BJ (cell line): ENCODE measurements at regions of chr2 and their contacts with region 1.

Region 1: GRCh38 chr2:241368643-241369042 is 12.6 kb downstream of the FARP2 start:
- DNase-seq: no peak
- H3K4me3 ChIP-seq: no peak overlapping the region
- H3K27me3 ChIP-seq: no peaks in the 10 kb centered on the region
- CTCF ChIP-seq: no peak

Region 2: GRCh38 chr2:241344925-241345651 is 23.6 kb before region 1 on chr2:
- CTCF ChIA-PET with region 1: no interaction called
- POLR2A ChIA-PET with region 1: no interaction called
- DNase-seq: no peak
- H3K4me3 ChIP-seq: no peak overlapping the region
- H3K27me3 ChIP-seq: no peaks in the 10 kb centered on the region
- CTCF ChIP-seq: no peak

Region 3: GRCh38 chr2:241399941-241400919 is 31.6 kb after region 1 on chr2:
- CTCF ChIA-PET with region 1: no interaction called
- POLR2A ChIA-PET with region 1: interaction called, 12 read pairs
- DNase-seq: no peak
- H3K4me3 ChIP-seq: no peak overlapping the region
- H3K27me3 ChIP-seq: no peaks in the 10 kb centered on the region
- CTCF ChIP-seq: no peak